ENCODE measurements at regions of chr2 and their contacts with region 1.

Region 1: GRCh38 chr2:159118115-159118858 is 149.8 kb downstream of the TANC1 start:
- DNase-seq: peak; percentile 80 to 91 (median 85)
- H3K4me3 ChIP-seq: no peak overlapping the region
- H3K27ac ChIP-seq: no peak overlapping the region
- H3K4me1 ChIP-seq: peaks cover 0 to 7% (median 3%) of the 10 kb centered on the region in 4 experiments
- H3K27me3 ChIP-seq: no peaks in the 10 kb centered on the region

Region 2: DNA sequence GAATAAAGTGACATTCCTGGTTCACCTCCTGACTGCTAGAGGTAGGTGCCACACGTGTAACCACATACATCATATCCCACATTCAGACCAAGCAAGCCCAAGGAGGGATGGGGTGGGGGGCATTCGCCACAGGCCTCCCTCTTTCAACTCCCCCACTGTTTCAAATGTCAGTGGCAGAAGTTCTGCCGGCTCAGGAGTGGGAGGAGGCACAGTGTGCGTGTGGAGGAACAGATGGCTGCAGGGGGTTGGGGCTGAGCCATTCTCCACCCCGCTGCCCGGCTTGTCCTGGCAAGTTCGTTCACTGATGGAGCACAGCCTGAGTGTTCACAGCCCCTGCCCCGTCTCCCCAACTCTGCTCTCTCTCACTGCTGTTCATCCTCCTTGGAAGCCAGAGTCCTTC is 225.3 kb before region 1 on chr2:
- CTCF ChIA-PET with region 1: interaction called, 11 read pairs
- POLR2A ChIA-PET with region 1: no interaction called
- DNase-seq: no peak
- H3K4me3 ChIP-seq: no peak overlapping the region
- H3K27ac ChIP-seq: no peak overlapping the region
- H3K4me1 ChIP-seq: no peaks in the 10 kb centered on the region
- H3K27me3 ChIP-seq: no peaks in the 10 kb centered on the region

Region 3: GRCh38 chr2:158998551-158999248 is 119.6 kb before region 1 on chr2:
- CTCF ChIA-PET with region 1: interaction called, 10 read pairs
- POLR2A ChIA-PET with region 1: no interaction called
- DNase-seq: peak in 1 of 3 donors; percentile 22
- H3K4me3 ChIP-seq: no peak overlapping the region
- H3K27ac ChIP-seq: no peak overlapping the region
- H3K4me1 ChIP-seq: peaks cover 7 to 33% (median 19%) of the 10 kb centered on the region in 4 experiments
- H3K27me3 ChIP-seq: no peaks in the 10 kb centered on the region

Region 4: GRCh38 chr2:159094173-159094737 is 24.0 kb before region 1 on chr2:
- CTCF ChIA-PET with region 1: interaction called, 12 read pairs
- POLR2A ChIA-PET with region 1: no interaction called
- DNase-seq: no peak
- H3K4me3 ChIP-seq: no peak overlapping the region
- H3K27ac ChIP-seq: no peak overlapping the region
- H3K4me1 ChIP-seq: peaks cover 11 to 41% (median 33%) of the 10 kb centered on the region in 4 experiments
- H3K27me3 ChIP-seq: no peaks in the 10 kb centered on the region

Region 5: DNA sequence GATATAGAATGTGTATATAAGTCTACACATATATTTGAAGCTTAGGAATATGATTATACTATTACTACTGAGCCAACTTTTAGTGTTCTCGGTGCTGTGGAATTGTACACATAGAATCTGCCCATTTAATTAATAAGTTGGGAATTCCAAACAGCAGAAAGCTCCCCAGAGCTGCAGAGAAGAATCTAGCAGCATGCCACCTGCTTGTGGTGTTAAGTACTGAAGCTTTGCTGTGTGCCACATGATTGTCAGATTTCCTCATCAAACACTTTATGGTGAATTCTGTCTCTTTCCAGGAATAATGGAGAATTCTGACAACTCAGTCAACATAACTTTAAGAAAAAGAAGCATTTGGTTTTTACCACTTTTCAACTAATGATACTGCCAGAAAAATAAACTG is 50.4 kb after region 1 on chr2:
- CTCF ChIA-PET with region 1: interaction called, 13 read pairs
- POLR2A ChIA-PET with region 1: no interaction called
- DNase-seq: no peak
- H3K4me3 ChIP-seq: no peak overlapping the region
- H3K27ac ChIP-seq: no peak overlapping the region
- H3K4me1 ChIP-seq: peaks cover 9 to 21% (median 14%) of the 10 kb centered on the region in 4 experiments
- H3K27me3 ChIP-seq: no peaks in the 10 kb centered on the region

Measured in common myeloid progenitor, CD34-positive (primary cell).